ENCODE measurements at regions of chr7 and their contacts with region 1.

Region 1: DNA sequence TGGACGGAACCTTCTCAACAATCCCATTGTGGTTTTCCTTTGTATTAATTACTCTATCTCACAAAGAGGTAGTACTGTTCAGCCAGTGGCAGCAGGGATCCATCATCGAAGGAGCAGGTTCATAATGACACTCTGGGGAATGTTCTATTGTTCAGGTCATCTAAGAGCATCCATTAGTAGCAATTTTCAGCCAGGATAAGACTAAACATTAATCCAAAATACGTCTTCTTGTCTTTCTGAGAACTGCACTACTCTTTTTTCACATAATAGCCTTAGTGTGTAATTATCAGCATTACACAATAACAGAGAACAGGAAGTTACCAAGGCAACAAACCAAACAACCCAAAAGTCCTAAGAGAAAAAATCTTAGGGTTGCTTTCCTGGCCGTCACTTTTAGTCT is 259.5 kb upstream of the VWC2 start:
- DNase-seq: no peak
- ATAC-seq: no peak
- H3K4me3 ChIP-seq: no peak overlapping the region
- H3K27ac ChIP-seq: no peak overlapping the region
- H3K4me1 ChIP-seq: no peaks in the 10 kb centered on the region
- H3K27me3 ChIP-seq: no peaks in the 10 kb centered on the region
- CTCF ChIP-seq: no peak
- EP300 ChIP-seq: no peak
- POLR2A ChIP-seq: no peak
- RAD21 ChIP-seq: no peak

Region 2: DNA sequence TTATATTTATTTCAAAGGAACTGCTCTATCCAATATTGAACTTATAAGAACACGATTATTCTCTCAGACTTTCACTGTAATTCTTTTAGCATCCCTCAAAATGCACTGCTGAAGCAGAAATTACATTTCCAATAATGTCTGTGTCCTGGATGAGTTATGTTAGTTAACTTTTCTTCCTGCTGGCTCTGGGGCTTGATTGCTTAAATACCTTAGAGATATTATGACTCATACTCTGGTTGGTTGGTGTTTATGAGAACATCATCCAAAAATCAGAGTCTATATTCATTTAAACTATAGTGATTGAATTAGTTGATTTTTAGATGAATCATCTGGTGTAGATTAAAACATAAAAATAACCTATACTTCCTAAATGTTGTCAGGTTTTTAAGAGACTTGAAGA is 13.3 kb after region 1 on chr7:
- CTCF ChIA-PET with region 1: no interaction called
- POLR2A ChIA-PET with region 1: no interaction called
- RAD21 ChIA-PET with region 1: no interaction called
- SMC1A ChIA-PET with region 1: no interaction called
- in situ Hi-C with region 1: no loop called
- intact Hi-C with region 1: loop called (anchors 2 kb)
- DNase-seq: no peak
- ATAC-seq: no peak
- H3K4me3 ChIP-seq: no peak overlapping the region
- H3K27ac ChIP-seq: no peak overlapping the region
- H3K4me1 ChIP-seq: no peaks in the 10 kb centered on the region
- H3K27me3 ChIP-seq: no peaks in the 10 kb centered on the region
- CTCF ChIP-seq: no peak
- EP300 ChIP-seq: no peak
- POLR2A ChIP-seq: no peak
- RAD21 ChIP-seq: no peak